ENCODE measurements at regions of chr6 and their contacts with region 1.

Region 1: DNA sequence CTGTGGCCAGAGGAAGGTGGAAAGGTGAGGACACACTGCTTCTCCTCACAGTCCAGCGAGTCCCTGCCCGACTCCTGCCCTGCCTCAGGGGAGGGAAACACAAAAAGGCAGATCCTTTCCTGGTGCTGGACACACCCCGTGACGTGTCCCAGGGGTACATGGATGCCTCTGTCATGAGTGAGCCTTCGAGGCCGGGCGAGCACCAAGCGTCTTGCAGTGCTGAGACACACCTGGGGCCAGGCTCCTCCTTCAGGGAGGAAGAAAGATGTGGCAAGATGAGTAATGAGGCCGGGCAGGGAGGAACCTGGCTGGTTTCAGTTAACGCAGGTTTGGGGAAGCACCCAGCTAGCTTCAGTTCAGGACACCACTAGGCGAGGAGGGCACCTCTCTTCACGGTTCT is 215.1 kb downstream of the LY86 start:
- H3K4me3 Mint-ChIP-seq: no peak overlapping the region
- H3K27ac Mint-ChIP-seq: peak overlapping the region; percentile 92
- H3K4me1 Mint-ChIP-seq: peaks cover 94% of the 10 kb centered on the region
- H3K27me3 Mint-ChIP-seq: no peaks in the 10 kb centered on the region

Region 2: GRCh38 chr6:6543181-6543879 is 260.2 kb before region 1 on chr6:
- intact Hi-C with region 1: no loop called
- H3K4me3 Mint-ChIP-seq: no peak overlapping the region
- H3K27ac Mint-ChIP-seq: peak overlapping the region; percentile 86
- H3K4me1 Mint-ChIP-seq: peaks cover 71% of the 10 kb centered on the region
- H3K27me3 Mint-ChIP-seq: peaks cover 55% of the 10 kb centered on the region

Region 3: DNA sequence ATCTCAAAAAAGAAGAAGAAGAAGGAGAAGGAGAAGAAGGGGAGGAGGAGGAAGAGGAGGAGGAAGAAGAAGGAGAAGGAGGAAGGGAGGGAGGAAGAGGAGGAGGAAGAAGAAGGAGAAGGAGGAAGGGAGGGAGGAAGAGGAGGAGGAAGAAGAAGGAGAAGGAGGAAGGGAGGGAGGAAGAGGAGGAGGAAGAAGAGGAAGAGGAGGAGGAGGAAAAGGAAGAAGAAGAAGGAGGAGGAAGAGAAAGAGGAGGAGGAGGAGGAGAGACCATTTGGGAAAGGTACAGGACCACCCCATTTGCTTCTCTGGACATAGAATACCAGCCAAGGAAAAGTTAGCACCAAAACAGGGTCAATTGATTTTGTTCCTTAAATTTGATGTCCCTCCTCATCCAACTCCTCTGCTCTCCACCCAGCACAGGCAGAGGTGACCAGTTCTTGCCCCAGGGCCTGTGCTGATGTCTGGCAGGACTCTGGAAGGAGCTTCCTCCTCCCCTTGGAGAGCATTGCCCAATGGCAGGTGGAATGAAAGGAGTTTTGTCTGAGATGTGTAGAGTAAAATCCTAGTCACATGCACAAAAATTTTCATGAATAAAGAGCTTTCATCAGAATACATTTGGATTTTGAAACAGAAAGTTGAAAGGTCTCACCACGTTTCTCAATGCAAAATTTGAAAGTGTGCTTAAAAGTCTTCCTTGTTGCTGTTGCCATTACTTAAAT is 32.2 kb before region 1 on chr6:
- intact Hi-C with region 1: no loop called
- H3K4me3 Mint-ChIP-seq: no peak overlapping the region
- H3K27ac Mint-ChIP-seq: peak overlapping the region; percentile 36
- H3K4me1 Mint-ChIP-seq: peaks cover 27% of the 10 kb centered on the region
- H3K27me3 Mint-ChIP-seq: no peaks in the 10 kb centered on the region

Region 4: DNA sequence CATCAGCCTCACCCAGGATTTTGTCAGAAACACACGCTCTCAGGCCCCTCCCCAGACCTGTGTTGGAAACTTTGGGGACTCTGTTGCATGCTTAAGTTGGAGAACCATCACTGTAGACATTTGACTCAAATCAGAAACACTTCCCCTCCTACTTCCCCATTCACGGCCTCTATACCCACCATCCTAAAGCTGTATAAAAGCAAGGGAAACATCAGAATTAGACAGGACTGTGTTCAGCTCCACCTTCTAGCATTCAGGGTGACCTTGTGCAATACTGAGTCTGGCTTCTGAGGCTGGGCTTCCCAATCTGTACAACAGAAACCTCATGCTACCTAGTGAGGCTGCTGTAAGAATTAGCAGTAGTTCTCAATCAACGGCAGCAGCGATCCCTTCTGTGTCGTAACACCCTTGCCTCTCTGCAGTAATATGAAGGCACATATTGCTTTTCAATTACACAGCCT is 37.3 kb after region 1 on chr6:
- intact Hi-C with region 1: loop called (anchors 5 kb)
- H3K4me3 Mint-ChIP-seq: peak overlapping the region; percentile 4
- H3K27ac Mint-ChIP-seq: peak overlapping the region; percentile 80
- H3K4me1 Mint-ChIP-seq: peaks cover 69% of the 10 kb centered on the region
- H3K27me3 Mint-ChIP-seq: no peaks in the 10 kb centered on the region

Region 5: DNA sequence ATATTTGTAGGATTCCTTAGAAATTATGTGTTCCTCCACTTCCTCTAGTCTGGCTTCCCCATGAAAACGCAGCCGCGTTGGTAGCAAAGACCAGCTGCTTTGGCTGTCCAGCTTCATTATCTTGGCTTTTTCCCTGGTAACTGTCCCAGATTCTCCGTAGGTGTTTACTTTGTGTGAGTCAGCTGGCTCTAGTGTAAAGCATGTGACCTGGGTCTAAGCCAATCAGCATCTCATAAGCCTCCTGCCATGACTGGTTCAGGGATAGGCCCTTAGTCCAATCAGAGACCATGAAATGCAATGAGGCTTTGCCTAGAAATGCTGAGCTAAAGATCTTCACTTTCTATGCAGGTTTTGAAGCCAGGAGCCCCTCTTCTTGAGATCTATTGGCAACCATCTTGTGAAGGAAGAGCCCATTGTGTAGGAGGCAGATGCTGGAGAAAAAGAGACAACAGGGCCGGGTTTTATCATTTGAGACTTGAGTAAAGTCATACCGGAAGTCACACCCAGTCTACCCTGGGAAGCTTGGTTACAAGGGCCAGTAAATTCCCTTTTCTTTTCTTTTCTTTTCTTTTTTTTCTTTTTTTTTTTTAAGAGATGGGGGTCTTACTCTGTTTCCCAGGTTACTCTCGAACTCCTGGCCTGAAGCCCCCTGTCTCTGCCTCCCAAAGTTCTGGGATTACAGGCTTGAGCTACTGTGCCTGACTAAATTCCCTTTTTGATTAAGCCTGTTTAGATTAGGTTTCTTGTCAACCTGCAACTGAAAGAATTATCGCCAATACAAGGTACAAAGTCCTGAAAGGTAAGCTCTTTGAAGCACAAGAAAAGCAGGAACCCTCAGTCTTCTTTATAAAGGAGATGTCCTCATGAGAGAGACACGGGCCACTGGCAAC is 47.7 kb after region 1 on chr6:
- intact Hi-C with region 1: loop called (anchors 5 kb)
- H3K4me3 Mint-ChIP-seq: peak overlapping the region; percentile 66
- H3K27ac Mint-ChIP-seq: peak overlapping the region; percentile 96
- H3K4me1 Mint-ChIP-seq: peaks cover 92% of the 10 kb centered on the region
- H3K27me3 Mint-ChIP-seq: no peaks in the 10 kb centered on the region